GM10248 (cell line): ENCODE measurements at regions of chr3 and their contacts with region 1.

Region 1: GRCh38 chr3:45656575-45657363 is 32.4 kb upstream of the SACM1L start:
- DNase-seq: peak; percentile 80
- CTCF ChIP-seq: peak; percentile 93

Region 2: DNA sequence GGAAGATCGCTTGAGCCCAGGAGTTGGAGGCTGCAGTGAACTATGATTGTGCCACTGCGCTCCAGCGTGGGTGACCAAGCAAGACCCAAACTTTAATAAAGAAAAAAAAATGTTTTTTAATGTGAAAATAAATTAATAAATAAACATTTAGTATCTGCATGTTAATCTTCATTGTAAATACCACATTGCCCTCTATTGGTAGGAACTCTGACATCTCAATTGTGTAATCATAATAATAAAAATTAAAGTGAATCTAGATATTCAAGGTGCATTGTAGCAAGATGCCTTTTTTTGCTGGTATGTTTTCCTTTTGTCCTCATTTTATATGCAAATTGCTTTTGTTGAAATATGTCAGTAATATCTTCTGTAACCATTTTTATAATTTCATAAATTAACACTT is 157.2 kb before region 1 on chr3:
- CTCF ChIA-PET with region 1: interaction called, 11 read pairs
- POLR2A ChIA-PET with region 1: no interaction called
- DNase-seq: no peak
- CTCF ChIP-seq: peak; percentile 16

Region 3: GRCh38 chr3:45537970-45538640 is 118.7 kb before region 1 on chr3:
- CTCF ChIA-PET with region 1: interaction called, 25 read pairs
- POLR2A ChIA-PET with region 1: no interaction called
- DNase-seq: no peak
- CTCF ChIP-seq: no peak

Region 4: DNA sequence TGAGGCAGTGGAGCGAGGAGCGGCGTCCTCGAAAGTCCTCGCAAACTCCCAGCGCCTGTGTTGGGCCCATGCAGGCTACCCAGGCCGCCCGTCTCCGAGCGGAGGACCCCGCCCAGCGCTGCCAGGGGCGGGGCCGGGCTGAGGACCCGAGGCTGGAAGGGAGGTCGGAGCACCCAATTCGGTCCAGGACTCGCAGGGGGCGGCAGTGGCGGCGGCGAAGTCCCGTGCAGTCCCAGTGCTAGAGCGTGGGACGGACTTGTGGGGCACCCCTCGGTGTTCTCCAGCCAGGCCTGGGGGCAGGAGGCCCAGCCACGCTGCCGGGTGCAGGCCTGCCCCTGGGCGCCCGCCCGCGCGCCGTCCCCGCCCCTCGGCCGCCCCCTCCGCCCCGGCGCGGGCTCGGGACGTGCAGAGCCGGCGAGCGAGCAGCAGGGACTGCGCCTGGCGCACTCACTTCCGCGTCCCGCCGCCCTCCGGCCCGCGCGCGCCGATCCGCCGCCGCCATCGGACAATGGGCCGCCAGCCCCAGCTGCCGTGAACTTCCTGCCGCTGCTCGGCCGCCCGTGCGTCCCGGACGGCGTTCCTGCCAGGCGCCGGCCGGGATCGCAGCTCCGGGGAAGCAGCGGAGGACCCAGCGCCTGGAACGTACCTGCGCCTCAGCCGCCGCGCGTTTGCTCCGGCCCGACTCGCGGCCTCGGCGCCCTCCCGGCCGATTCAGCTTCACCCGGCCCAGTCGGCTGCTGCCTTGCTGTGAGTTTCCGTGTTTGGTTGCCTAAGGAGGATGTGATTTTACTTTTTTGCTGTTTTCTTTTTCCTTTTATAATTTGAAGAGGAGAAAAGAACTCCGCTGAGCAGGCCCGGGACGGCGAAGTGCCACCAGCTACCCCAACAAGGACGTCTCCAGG is 62.8 kb before region 1 on chr3:
- CTCF ChIA-PET with region 1: interaction called, 27 read pairs
- POLR2A ChIA-PET with region 1: no interaction called
- DNase-seq: peak; percentile 89
- CTCF ChIP-seq: no peak

Region 5: DNA sequence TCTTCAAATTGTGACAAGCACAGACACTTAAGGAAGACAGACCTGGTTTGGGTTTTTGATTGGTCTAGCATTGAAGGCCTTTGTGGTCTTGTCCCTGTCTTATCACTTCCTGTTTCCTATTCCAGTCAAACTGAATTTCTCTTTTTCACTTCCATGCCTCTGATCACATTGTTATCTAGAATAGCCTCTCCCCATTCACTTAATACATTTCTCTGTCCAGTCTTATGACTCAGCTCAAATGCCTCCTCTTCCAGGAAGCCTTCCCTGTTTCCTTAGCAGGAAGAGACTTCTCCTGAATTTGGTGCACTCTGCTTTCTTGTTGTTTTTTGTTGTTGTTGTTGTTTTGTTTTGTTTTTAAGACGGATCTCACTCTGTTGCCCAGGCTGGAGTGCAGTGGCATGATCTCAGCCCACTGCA is 16.7 kb before region 1 on chr3:
- CTCF ChIA-PET with region 1: interaction called, 31 read pairs
- POLR2A ChIA-PET with region 1: no interaction called
- DNase-seq: no peak
- CTCF ChIP-seq: no peak

Region 6: DNA sequence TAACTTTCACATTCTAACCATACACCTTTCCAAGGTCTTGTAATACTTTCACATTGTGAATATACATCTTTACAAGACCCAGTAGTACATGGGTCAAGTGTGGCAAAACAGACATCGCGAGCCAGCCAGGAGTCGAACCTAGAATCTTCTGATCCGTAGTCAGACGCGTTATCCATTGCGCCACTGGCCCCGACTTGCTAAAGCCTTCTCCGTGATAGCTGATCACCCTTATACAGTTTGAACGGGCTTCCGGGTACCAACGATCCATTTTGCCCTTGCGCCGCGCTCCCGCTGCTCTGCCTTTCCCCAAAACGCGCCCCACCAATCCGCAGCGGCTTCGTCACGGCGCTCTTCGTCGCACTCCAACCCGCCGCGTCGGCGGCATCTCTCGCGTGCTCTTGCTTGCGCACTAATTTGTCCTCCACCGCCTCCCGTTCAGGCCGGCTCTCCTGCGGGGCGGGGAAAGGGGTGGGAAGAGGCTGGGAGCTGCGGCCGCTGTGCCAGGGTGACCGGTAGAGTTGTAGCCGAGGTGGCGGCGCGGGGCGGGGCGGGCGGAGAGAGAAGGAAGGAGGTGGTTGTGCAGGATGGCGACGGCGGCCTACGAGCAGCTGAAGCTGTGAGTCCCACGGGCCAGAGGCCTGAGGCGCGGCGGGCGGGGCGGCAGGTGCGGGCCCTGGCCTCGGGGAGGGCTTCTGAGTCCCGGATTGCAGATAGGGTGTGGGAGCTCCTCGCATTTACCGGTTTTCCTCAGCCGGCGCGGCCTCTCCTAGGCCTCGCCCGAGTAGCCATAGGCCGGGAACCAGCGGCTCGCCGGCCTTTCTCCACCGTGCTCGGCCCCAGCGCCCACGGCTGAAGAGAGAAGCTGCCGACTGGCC is 32.4 kb after region 1 on chr3 and contains the start of gene SACM1L:
- CTCF ChIA-PET with region 1: interaction called, 16 read pairs
- POLR2A ChIA-PET with region 1: no interaction called
- DNase-seq: peak; percentile 90
- CTCF ChIP-seq: no peak

Region 7: DNA sequence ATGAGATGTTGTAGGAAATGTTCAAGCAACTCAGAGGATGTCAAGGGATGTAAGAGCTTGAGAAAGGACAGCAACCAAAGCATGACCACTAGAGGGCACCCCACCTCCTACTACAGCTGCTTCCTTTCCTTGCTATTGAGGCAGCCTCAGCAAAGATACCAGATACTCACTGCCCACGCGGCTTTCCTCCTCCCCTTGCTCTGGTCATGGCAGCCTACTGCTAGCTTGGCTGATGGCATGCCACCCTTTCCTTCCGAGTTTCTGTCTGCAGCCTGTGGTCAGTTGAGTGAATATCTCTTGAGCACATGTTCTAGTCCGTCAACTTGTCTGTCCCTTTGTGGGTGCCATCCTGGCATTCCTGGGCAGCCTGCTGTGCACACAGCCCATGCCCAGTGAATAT is 282.1 kb after region 1 on chr3:
- CTCF ChIA-PET with region 1: no interaction called
- POLR2A ChIA-PET with region 1: no interaction called
- DNase-seq: peak; percentile 79
- CTCF ChIP-seq: peak; percentile 82